ENCODE measurements at regions of chr3 and their contacts with region 1.

Region 1: GRCh38 chr3:30644593-30645012 is 38.2 kb downstream of the TGFBR2 start:
- DNase-seq: no peak
- ATAC-seq: peak; percentile 48
- H3K4me3 Mint-ChIP-seq: peak overlapping the region; percentile 76
- H3K27ac Mint-ChIP-seq: peak overlapping the region; percentile 95
- H3K4me1 Mint-ChIP-seq: peaks cover 90% of the 10 kb centered on the region
- H3K27me3 Mint-ChIP-seq: no peaks in the 10 kb centered on the region

Region 2: DNA sequence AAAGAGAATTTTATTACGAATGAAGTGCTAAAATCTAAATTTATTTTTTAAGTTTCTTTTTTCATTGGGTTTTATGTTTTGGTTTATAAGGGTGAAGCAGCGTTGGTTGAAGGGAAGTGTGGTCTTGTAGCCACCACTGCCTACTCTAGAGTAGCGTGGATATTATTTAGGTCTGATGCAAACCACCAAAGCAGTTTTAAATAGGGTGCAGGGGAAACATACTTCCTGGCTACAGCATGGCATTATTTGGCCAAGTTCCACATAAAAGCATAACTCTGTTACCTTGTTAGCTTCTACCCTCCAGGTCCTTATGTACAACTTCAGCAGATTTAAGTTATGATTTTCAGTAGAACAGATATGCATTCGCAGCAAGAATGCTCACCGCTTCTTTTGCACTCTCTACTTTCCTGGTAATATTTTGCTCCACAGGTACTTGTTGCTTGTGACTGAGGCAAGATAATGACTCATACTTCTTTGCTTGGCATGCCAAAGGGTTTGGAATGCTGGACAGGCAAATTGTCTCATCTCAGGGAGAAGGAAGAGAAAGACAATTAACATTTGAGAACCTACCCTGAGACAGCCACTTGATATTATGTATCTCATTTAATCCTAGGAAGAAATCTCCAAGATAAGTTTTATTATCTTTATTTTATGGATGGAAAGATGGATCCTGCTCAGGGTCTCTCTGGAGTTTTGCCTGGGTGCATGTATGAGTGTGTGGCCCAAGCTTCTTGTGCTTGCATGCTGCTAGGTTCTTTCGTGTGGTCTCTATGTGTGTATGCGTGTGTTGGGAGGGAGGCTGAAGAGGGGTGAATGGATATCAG is 32.8 kb before region 1 on chr3:
- POLR2A ChIA-PET with region 1: interaction called, 31 read pairs
- DNase-seq: no peak
- ATAC-seq: peak; percentile 10
- H3K4me3 Mint-ChIP-seq: peak overlapping the region; percentile 97
- H3K27ac Mint-ChIP-seq: peak overlapping the region; percentile 85
- H3K4me1 Mint-ChIP-seq: peaks cover 70% of the 10 kb centered on the region
- H3K27me3 Mint-ChIP-seq: no peaks in the 10 kb centered on the region

Region 3: DNA sequence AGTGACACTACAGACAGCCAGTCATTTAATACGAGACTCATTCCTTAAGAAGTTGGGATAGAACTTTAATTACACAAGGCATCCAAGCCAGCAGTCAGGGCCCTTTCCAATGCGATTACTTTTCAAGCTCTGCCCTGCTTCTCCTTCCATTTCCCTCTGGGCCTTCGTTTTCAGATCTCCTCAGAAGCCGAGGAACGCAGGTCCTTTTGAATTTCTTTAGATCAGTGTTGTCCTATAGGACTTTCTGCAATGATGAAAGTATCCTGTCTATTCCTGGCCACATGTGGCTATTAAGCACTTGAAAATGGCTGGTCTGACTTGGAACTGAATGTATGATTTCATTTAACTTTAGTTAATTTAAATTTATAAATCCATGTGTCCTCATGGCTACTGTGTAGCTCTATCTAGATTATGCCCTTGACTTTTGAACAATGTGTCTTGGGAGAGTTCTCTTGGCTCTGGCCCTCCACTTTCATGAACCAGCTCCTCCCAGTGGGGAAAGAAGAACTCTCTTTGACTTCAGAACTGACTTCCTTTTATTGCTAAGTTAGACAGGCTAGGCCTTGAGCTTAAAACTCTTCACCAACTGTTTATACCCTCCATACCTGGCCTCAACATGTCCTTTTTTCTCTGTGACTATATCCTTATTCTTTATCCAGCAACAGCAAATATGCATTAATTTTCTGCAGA is 15.6 kb before region 1 on chr3:
- POLR2A ChIA-PET with region 1: interaction called, 15 read pairs
- DNase-seq: no peak
- ATAC-seq: peak; percentile 49
- H3K4me3 Mint-ChIP-seq: peak overlapping the region; percentile 61
- H3K27ac Mint-ChIP-seq: peak overlapping the region; percentile 89
- H3K4me1 Mint-ChIP-seq: peaks cover 81% of the 10 kb centered on the region
- H3K27me3 Mint-ChIP-seq: no peaks in the 10 kb centered on the region

Region 4: DNA sequence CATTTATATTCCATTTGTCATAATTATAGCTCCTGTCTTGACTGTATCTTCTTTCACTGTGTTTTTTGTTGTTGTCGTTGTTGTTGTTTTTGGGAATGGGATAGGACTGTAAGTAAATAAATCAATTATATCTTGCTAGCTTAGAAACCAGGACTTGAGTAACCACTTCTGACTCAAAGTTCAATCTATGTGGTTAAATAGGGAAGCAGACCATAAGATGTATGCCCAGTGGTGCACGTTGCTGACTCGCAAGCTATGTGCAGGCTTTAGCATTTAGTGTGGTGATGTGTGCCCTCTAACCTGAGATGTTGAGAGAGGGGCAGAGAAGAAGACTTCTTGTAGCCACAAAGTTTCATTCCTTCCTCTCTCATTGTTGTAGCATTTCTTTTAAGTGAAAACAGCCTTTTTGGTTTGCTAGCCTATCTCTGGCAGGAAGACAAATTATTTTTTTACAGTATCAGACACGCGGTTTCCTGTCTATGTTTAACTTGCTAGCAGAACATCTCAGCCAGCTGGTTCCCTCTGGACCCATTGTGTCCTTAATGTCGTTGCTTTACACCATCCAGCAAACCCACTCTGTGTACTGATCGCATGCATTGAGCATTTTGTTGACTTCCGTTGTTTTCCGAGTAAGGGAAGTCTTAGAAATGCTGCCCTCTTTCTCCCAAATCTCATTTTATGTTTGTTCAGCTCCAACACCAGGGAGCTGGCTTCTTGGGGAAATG is 13.9 kb after region 1 on chr3:
- POLR2A ChIA-PET with region 1: interaction called, 47 read pairs
- DNase-seq: no peak
- ATAC-seq: peak; percentile 58
- H3K4me3 Mint-ChIP-seq: peak overlapping the region; percentile 82
- H3K27ac Mint-ChIP-seq: peak overlapping the region; percentile 96
- H3K4me1 Mint-ChIP-seq: peaks cover 83% of the 10 kb centered on the region
- H3K27me3 Mint-ChIP-seq: no peaks in the 10 kb centered on the region

Region 5: DNA sequence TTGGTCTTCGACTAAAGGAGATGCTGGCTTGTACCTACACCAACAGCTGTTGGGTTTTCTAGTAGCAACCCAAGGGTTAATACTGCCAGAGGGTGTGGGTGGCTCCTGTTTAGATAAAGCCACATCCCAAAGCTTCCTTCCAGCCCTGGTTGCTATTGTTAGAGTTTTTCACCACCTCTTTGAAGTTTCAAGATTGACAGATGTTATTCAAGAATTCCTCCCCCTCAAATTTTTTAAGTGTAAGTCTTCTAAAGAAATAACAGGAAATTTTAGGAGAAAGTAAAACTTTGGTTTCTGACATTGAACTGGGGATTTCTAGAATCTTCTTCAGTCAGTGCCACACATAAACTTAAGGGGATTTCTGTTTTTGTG is 22.7 kb after region 1 on chr3:
- POLR2A ChIA-PET with region 1: interaction called, 13 read pairs
- DNase-seq: no peak
- ATAC-seq: peak; percentile 71
- H3K4me3 Mint-ChIP-seq: peak overlapping the region; percentile 52
- H3K27ac Mint-ChIP-seq: peak overlapping the region; percentile 88
- H3K4me1 Mint-ChIP-seq: peaks cover 78% of the 10 kb centered on the region
- H3K27me3 Mint-ChIP-seq: no peaks in the 10 kb centered on the region